Naive thymus-derived CD4-positive, alpha-beta T cell (primary cell): ENCODE measurements at regions of chr17 and their contacts with region 1.

Region 1: DNA sequence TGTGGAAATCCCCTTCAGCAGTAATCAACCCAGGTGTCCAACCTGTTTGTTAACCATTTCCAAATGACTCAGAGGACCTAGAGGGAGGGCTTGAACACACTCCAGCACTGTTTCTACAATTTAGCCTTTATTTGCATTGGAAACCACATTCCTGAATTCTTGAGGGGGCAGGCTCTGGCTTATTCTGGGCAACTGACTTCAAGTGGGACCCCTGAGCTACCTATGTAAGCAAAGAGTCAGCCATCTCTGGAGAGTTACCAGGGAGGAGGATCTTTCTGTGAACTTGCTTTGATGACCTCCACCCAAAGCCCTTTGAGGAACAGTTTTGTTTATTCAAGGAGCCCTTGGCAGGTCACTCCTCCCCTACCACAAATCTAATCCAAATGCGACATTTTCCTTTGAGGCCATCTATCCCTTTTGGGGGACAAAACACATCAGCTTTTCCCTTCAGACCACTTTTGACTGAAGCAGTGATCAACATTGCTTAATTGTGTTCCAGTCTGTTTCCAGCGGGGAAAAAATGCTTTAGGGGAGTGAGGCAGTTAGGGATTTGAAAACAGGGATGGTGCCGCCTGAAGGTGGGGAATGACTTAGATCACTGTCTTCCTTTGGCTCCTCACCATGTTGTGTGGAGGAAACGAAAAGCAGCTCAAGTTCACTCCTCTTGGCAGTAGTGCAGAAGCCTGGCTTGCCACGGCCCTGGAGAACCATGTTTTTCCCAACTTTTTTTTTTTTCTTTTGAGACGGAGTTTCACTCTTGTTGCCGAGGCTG is 46.2 kb downstream of the TUBD1 start:
- DNase-seq: peak in 1 of 9 donors; percentile 34
- ATAC-seq: peak; percentile 58
- H3K4me3 ChIP-seq: no peak overlapping the region
- H3K4me3 Mint-ChIP-seq: peak overlapping the region in 6 of 10 donors; percentile 4 to 76 (median 25)
- H3K27ac ChIP-seq: peak overlapping the region; percentile 60
- H3K27ac Mint-ChIP-seq: peak overlapping the region in 8 of 9 donors; percentile 7 to 91 (median 65)
- H3K4me1 ChIP-seq: peaks cover 16 to 19% of the 10 kb centered on the region in 2 donors
- H3K4me1 Mint-ChIP-seq: peaks cover 23 to 65% (median 49%) of the 10 kb centered on the region in 7 donors
- H3K27me3 ChIP-seq: no peaks in the 10 kb centered on the region
- H3K27me3 Mint-ChIP-seq: peaks cover 0 to 3% (median 0%) of the 10 kb centered on the region in 5 donors

Region 2: GRCh38 chr17:58329035-58329809 is 1517.4 kb before region 1 on chr17:
- CTCF ChIA-PET with region 1: no interaction called
- POLR2A ChIA-PET with region 1: no interaction called
- intact Hi-C with region 1: loop called in 1 of 2 experiments (anchors 5 kb)
- DNase-seq: peak in 8 of 9 donors; percentile 52 to 83 (median 62)
- ATAC-seq: peak; percentile 62
- H3K4me3 ChIP-seq: peak overlapping the region; percentile 64
- H3K4me3 Mint-ChIP-seq: peak overlapping the region; percentile 86 to 100 (median 94)
- H3K27ac ChIP-seq: peak overlapping the region; percentile 98
- H3K27ac Mint-ChIP-seq: peak overlapping the region; percentile 91 to 98 (median 94)
- H3K4me1 ChIP-seq: peaks cover 4 to 18% of the 10 kb centered on the region in 2 donors
- H3K4me1 Mint-ChIP-seq: peaks cover 37 to 61% (median 50%) of the 10 kb centered on the region in 7 donors
- H3K27me3 ChIP-seq: no peaks in the 10 kb centered on the region
- H3K27me3 Mint-ChIP-seq: peaks cover 0 to 19% (median 0%) of the 10 kb centered on the region in 5 donors

Region 3: DNA sequence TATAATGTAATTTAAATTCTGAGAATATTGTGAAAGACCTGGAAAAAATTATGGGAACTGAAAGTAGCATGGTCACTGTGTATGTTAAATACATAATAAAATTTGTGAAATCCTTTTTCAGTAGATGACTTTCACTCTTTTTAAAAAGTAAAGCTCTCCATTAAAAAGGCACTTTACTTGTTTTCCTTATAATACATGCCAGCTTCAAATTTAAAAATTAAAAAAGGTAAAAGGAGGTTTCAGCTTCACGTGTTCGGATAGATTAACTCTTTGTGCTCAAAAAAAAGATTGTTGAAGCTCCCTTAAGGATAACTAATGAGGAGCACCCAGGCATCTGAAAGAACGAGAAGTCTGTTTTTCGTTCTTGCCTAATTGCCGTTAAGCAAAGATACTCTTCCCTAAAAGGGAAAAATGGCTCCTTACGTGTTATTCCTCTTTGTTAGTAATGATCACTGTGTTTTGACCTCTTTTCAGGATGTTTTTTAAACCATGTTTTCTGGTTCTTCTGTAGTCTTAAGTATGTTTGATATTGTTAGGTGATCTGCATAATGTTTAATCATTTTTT is 41.6 kb before region 1 on chr17:
- CTCF ChIA-PET with region 1: no interaction called
- POLR2A ChIA-PET with region 1: no interaction called
- intact Hi-C with region 1: no loop called
- DNase-seq: no peak
- ATAC-seq: peak; percentile 32
- H3K4me3 ChIP-seq: no peak overlapping the region
- H3K4me3 Mint-ChIP-seq: no peak overlapping the region
- H3K27ac ChIP-seq: no peak overlapping the region
- H3K27ac Mint-ChIP-seq: no peak overlapping the region
- H3K4me1 ChIP-seq: no peaks in the 10 kb centered on the region
- H3K4me1 Mint-ChIP-seq: peaks cover 0 to 30% (median 0%) of the 10 kb centered on the region in 7 donors
- H3K27me3 ChIP-seq: no peaks in the 10 kb centered on the region
- H3K27me3 Mint-ChIP-seq: no peaks in the 10 kb centered on the region

Region 4: DNA sequence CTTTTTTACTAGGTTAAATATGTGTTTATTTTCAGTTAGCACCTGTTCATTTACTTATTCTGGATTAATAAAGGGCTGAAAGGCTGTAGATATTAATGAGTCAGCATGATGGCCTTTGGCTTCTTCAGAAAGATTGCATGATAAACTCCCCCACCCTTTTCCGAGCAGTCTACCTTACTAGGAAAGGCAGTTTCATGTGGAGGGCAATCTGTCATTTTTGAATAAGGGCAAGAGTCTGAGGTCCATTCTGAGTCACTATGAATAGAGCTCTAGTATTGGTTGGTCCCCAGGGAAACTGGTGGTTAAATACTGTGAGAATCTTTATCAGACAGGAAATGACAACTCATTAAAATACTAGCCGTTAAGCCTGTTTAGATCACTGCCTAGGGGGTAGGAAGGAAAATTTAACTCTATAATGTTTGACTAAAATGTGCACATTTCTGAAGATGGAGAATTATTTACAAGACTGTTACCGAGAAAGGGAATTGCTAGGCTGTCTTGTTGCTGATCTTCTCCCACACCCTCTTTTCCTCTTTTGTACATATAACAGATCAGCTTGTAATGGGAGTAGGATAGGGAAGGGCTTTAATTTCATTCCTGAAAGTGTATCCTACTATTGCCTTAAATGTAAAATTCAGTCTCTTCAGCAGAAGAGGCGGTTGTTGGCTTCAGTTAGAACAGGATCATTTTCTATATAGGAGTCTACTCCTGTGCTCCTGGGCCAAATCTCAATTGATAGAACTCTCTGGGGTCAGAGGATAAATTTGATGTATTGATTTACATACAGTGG is 17.2 kb before region 1 on chr17:
- CTCF ChIA-PET with region 1: interaction called, 4 read pairs
- POLR2A ChIA-PET with region 1: interaction called, 4 read pairs
- intact Hi-C with region 1: loop called in 1 of 2 experiments (anchors 2 kb)
- DNase-seq: peak in 1 of 9 donors; percentile 51
- ATAC-seq: peak; percentile 89
- H3K4me3 ChIP-seq: no peak overlapping the region
- H3K4me3 Mint-ChIP-seq: peak overlapping the region in 2 of 10 donors; percentile 61 to 86
- H3K27ac ChIP-seq: peak overlapping the region; percentile 50
- H3K27ac Mint-ChIP-seq: peak overlapping the region; percentile 49 to 97 (median 69)
- H3K4me1 ChIP-seq: peaks cover 14 to 46% of the 10 kb centered on the region in 2 donors
- H3K4me1 Mint-ChIP-seq: peaks cover 19 to 81% (median 43%) of the 10 kb centered on the region in 7 donors
- H3K27me3 ChIP-seq: no peaks in the 10 kb centered on the region
- H3K27me3 Mint-ChIP-seq: no peaks in the 10 kb centered on the region